ENCODE measurements at regions of chrX and their contacts with region 1.

Region 1: DNA sequence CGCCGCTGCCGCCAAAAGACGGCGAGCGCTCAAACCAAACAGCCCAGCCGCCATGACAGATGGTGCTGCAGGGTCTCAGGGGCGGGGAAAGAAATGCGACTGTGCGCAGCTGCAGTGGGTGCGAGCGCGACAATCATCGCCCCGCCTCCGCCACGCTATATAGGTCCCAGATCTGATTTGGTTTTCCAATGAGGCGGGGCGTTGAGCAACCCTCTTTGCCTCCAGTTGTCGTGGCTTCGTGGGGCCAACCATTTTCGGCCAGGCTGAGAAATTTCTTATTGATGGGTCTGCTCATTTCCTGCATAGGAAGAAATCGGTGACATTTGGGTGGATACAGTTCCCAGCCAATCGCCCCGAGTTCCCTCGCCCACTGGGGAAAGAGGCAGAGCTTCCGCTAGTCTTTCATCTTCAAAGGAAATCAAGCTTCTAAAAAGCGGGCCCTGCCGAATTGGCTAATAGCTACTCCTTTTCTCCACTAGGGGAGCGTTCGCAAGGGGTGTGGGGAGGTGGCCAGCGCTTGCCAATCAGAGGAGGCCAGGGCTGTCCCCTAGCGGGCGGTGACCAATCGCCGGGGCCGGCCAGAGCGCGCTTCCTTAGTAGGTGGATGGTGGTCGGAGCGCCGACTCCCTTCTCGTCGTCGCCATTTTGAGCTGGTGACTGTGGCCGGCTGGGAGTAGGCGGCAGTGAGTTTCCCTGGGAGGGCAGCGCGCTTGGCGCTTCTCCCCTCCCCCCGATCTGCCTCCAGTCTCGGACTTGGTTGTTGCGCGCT is at the starts of genes NDUFB11 and RBM10:
- DNase-seq: peak; percentile 97
- H3K4me3 Mint-ChIP-seq: peak within 1 kb of the TSS; percentile 100
- H3K27ac Mint-ChIP-seq: peak within 1 kb of the TSS; percentile 100
- H3K4me1 Mint-ChIP-seq: peaks cover 16% of the 10 kb centered on the region
- H3K27me3 Mint-ChIP-seq: no peaks in the 10 kb centered on the region
- total RNA-seq, gene NDUFB11: 86.8 and 89.5 TPM in 2 replicates
- total RNA-seq, gene RBM10: 64.3 and 64.6 TPM in 2 replicates

Region 2: GRCh38 chrX:47112316-47112954 is 32.4 kb before region 1 on chrX:
- intact Hi-C with region 1: no loop called
- DNase-seq: no peak
- H3K4me3 Mint-ChIP-seq: no peak overlapping the region
- H3K27ac Mint-ChIP-seq: no peak overlapping the region
- H3K4me1 Mint-ChIP-seq: no peaks in the 10 kb centered on the region
- H3K27me3 Mint-ChIP-seq: no peaks in the 10 kb centered on the region

Region 3: DNA sequence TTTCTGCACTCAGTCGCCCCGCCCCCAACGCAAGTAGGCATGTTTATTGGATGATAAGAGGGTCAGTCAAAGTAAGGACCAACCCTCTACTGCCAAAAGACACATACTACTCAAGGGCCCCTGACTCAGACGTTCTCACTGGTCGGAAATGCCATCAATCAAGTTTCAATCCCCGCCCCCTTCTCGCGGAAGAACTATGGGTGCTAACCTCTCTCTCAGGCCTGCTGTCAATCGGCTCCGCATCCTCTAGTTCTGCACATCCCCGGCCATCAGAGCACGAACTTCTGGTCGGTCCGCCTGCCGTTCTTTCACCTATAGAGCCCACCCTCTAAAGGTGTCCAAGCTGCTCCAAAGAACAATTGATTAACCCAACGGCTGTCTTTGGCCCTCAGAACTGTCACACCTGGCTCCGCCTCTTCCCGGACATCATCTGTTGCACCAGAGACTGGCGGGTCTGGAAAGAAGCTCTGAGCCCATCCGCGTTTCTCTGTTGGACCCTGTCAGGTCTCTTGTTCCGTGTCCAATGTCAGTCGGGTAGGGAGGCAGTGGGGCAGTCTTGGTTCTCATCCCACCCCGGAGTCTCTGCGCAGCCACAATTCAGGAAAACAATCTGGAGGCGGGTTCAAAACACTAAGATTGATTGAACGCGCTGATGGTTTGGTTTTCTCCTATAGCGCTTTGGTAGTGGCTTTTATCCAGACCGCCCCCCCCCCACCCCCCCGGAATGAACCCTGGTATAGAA is 15.5 kb before region 1 on chrX:
- intact Hi-C with region 1: loop called (anchors 1 kb)
- DNase-seq: peak; percentile 97
- H3K4me3 Mint-ChIP-seq: peak overlapping the region; percentile 100
- H3K27ac Mint-ChIP-seq: peak overlapping the region; percentile 98
- H3K4me1 Mint-ChIP-seq: peaks cover 2% of the 10 kb centered on the region
- H3K27me3 Mint-ChIP-seq: no peaks in the 10 kb centered on the region

Region 4: GRCh38 chrX:47217642-47218279 is 73.0 kb after region 1 on chrX:
- intact Hi-C with region 1: loop called (anchors 1 kb)
- DNase-seq: peak; percentile 98
- H3K4me3 Mint-ChIP-seq: peak overlapping the region; percentile 92
- H3K27ac Mint-ChIP-seq: peak overlapping the region; percentile 99
- H3K4me1 Mint-ChIP-seq: peaks cover 37% of the 10 kb centered on the region
- H3K27me3 Mint-ChIP-seq: no peaks in the 10 kb centered on the region

Region 5: GRCh38 chrX:47233337-47234113 is 88.7 kb after region 1 on chrX:
- intact Hi-C with region 1: loop called (anchors 2 kb)
- DNase-seq: peak; percentile 97
- H3K4me3 Mint-ChIP-seq: peak overlapping the region; percentile 87
- H3K27ac Mint-ChIP-seq: peak overlapping the region; percentile 98
- H3K4me1 Mint-ChIP-seq: peaks cover 20% of the 10 kb centered on the region
- H3K27me3 Mint-ChIP-seq: peaks cover 3% of the 10 kb centered on the region

Region 6: GRCh38 chrX:47482512-47483309 is 337.9 kb after region 1 on chrX and contains the start of gene ZNF41:
- intact Hi-C with region 1: loop called (anchors 2 kb)
- DNase-seq: peak; percentile 90
- H3K4me3 Mint-ChIP-seq: peak within 1 kb of the TSS; percentile 97
- H3K27ac Mint-ChIP-seq: peak within 1 kb of the TSS; percentile 90
- H3K4me1 Mint-ChIP-seq: peaks cover 17% of the 10 kb centered on the region
- H3K27me3 Mint-ChIP-seq: no peaks in the 10 kb centered on the region
- total RNA-seq, gene ZNF41: 10.0 and 10.5 TPM in 2 replicates

Region 7: DNA sequence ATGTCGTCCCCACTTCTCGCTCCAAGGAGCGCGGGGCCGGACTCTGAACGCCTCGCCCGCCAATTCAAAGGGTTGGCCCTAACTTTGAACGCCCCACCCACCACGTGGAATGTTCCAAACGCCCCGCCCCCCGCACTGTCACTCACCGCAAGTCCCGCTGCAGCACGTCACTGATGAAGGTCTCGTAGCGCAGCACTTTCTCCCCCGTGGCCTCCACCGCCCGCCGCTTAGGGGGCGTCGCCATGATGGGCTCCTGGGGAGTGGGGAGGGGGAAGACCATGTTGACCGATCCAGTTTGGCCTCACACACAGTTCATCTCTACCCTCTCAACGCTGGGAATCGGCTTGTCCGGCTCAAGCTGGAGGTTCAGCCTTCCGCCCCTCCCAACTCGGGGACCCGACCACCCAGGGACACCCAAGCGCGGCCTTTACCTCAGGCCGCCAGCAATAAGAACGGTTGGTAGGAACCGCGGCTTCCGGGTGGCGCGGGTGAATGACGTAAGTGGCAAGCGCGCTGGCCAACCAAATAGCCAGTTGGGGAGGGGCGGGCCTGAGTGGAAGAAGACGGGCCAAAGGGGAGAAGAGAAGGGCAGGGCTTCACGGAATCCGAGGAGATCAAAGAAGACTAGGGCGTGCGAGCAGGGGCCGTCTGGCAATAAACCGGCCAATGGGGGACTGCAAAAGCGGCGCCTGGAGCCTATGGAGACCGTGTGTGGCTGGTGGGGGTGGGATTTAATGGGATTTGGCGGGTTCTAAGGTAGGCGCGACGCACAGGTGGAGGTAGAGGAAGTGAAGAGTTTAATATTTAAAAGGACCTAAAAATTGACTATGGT is 514.1 kb after region 1 on chrX and contains the start of gene UXT:
- intact Hi-C with region 1: loop called (anchors 5 kb)
- DNase-seq: peak; percentile 97
- H3K4me3 Mint-ChIP-seq: peak within 1 kb of the TSS; percentile 88
- H3K27ac Mint-ChIP-seq: peak within 1 kb of the TSS; percentile 99
- H3K4me1 Mint-ChIP-seq: peaks cover 29% of the 10 kb centered on the region
- H3K27me3 Mint-ChIP-seq: no peaks in the 10 kb centered on the region
- total RNA-seq, gene UXT: 174 and 194 TPM in 2 replicates

Measured in activated CD4-positive, alpha-beta T cell treated with anti-CD3 and anti-CD28 coated beads, Interleukin-2, amount 10 ng/mL, durations not matched to agents 24 days and 14 days (primary cell).